Activated CD8-positive, alpha-beta T cell treated with anti-CD3 and anti-CD28 coated beads, Interleukin-2, amount 10 ng/mL, durations not matched to agents 7 days and 5 days (primary cell): ENCODE measurements at regions of chr1 and their contacts with region 1.

Region 1: GRCh38 chr1:93061895-93062792 is 16.9 kb upstream of the MTF2 start:
- DNase-seq: peak; percentile 61
- ATAC-seq: peak; percentile 76
- H3K4me3 Mint-ChIP-seq: no peak overlapping the region
- H3K27ac Mint-ChIP-seq: no peak overlapping the region
- H3K4me1 Mint-ChIP-seq: peaks cover 2% of the 10 kb centered on the region
- H3K27me3 Mint-ChIP-seq: peaks cover 27% of the 10 kb centered on the region

Region 2: GRCh38 chr1:93015590-93015989 is 46.6 kb before region 1 on chr1:
- CTCF ChIA-PET with region 1: interaction called, 47 read pairs
- POLR2A ChIA-PET with region 1: no interaction called
- DNase-seq: no peak
- ATAC-seq: no peak
- H3K4me3 Mint-ChIP-seq: no peak overlapping the region
- H3K27ac Mint-ChIP-seq: no peak overlapping the region
- H3K4me1 Mint-ChIP-seq: peaks cover 13% of the 10 kb centered on the region
- H3K27me3 Mint-ChIP-seq: peaks cover 26% of the 10 kb centered on the region

Region 3: DNA sequence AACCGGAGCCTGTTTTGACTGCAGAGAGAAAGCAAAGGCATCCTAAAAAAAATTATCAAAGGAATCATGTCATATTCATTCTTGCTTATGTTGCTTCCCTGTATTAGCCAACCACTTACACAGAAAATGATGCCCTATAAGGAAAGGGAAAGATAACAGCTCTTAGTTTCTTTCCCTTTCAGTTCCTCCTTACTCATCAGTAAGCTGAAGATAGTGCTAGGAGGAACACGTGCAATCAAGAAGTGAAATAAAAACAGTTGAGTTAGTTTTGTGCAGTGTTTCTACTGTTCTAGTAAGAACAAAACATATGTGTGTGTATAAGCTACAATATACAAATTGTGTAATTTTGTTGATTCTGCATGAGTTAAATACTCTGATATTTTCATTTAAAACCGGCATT is 28.4 kb before region 1 on chr1:
- CTCF ChIA-PET with region 1: interaction called, 16 read pairs
- POLR2A ChIA-PET with region 1: no interaction called
- DNase-seq: no peak
- ATAC-seq: no peak
- H3K4me3 Mint-ChIP-seq: no peak overlapping the region
- H3K27ac Mint-ChIP-seq: no peak overlapping the region
- H3K4me1 Mint-ChIP-seq: peaks cover 36% of the 10 kb centered on the region
- H3K27me3 Mint-ChIP-seq: no peaks in the 10 kb centered on the region

Region 4: DNA sequence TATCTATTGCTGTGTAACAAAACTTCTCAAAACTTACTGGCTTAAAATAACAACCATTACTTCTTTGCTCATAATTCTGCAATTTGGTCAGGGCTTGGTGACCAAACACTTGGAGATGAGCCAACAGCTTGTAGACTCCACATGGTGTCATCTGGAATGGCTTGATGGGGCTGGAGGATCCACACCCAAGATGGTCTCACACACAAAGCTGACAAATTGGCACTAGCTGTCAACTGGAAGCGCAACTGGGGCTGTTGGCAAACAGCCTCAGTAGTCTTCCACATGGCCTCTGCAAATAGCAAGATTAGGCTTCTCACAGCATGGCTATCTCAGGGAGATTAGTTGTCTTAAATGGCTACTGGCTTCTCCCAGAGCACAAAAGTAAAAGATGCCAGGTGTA is 10.2 kb before region 1 on chr1:
- CTCF ChIA-PET with region 1: interaction called, 20 read pairs
- POLR2A ChIA-PET with region 1: no interaction called
- DNase-seq: no peak
- ATAC-seq: no peak
- H3K4me3 Mint-ChIP-seq: no peak overlapping the region
- H3K27ac Mint-ChIP-seq: no peak overlapping the region
- H3K4me1 Mint-ChIP-seq: no peaks in the 10 kb centered on the region
- H3K27me3 Mint-ChIP-seq: peaks cover 4% of the 10 kb centered on the region

Region 5: DNA sequence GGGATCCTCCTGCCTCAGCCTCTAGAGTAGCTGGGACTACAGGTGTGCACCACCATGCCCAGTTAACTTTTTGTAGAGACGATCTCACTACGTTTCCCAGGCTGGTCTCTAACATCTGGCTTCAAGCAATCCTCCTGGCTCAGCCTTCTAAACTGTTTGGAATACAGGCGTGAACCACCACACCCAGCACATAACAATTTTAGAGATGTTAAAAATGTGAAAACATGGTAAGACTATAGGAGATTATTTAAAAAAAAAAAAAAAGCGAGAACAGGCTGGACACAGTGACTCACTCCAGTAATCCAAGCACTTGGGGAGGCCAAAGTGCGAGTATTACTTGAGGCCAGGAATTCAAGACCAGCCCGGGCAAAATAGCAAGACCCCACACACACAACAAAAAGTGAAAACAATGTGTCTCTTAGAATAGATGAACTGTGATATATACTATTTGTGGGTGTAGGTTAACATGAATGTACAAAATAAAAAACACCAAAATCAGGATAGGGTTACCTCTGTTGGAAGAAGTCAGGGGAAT is 138.0 kb after region 1 on chr1:
- CTCF ChIA-PET with region 1: no interaction called
- POLR2A ChIA-PET with region 1: no interaction called
- DNase-seq: no peak
- ATAC-seq: no peak
- H3K4me3 Mint-ChIP-seq: no peak overlapping the region
- H3K27ac Mint-ChIP-seq: no peak overlapping the region
- H3K4me1 Mint-ChIP-seq: no peaks in the 10 kb centered on the region
- H3K27me3 Mint-ChIP-seq: no peaks in the 10 kb centered on the region